Psoas muscle (tissue), 8 donors: ENCODE measurements at regions of chr3 and their contacts with region 1.

Region 1: GRCh38 chr3:79490165-79491028 is 277.4 kb downstream of the ROBO1 start:
- DNase-seq: peak; percentile 30 to 66
- ATAC-seq: peak in 1 of 4 donors; percentile 55
- H3K4me3 ChIP-seq: no peak overlapping the region
- H3K27ac ChIP-seq: no peak overlapping the region
- H3K4me1 ChIP-seq: peaks cover 3% of the 10 kb centered on the region
- H3K27me3 ChIP-seq: no peaks in the 10 kb centered on the region
- CTCF ChIP-seq: no peak

Region 2: DNA sequence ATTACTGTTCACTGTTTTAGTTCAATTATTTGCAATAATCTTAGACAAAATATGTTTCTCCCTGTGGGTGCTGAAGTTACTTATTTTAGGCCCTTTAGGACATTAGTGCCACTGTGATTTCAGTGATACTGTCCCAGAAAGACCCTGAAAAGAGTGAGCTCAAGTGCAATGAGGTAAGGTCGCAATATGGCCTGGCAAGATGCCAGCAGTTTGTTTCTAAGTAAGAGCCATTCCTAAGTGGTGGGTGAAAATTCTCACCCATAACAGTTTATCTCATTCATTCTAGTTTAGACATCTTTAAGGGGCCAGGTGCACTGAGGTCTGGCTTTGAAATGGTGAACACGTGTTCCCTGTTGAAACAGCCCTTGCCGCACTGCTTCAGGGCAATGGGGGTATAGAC is 1697.2 kb before region 1 on chr3:
- intact Hi-C with region 1: no loop called
- DNase-seq: no peak
- ATAC-seq: no peak
- H3K4me3 ChIP-seq: no peak overlapping the region
- H3K27ac ChIP-seq: no peak overlapping the region
- H3K4me1 ChIP-seq: no peaks in the 10 kb centered on the region
- H3K27me3 ChIP-seq: no peaks in the 10 kb centered on the region
- CTCF ChIP-seq: no peak

Region 3: GRCh38 chr3:79473993-79474392 is 16.4 kb before region 1 on chr3:
- intact Hi-C with region 1: loop called in 1 of 2 experiments (anchors 2 kb)
- DNase-seq: no peak
- ATAC-seq: no peak
- H3K4me3 ChIP-seq: no peak overlapping the region
- H3K27ac ChIP-seq: no peak overlapping the region
- H3K4me1 ChIP-seq: no peaks in the 10 kb centered on the region
- H3K27me3 ChIP-seq: no peaks in the 10 kb centered on the region
- CTCF ChIP-seq: no peak